H1 (cell line): ENCODE measurements at regions of chr11 and their contacts with region 1.

Region 1: GRCh38 chr11:67082035-67082791 is 25.6 kb downstream of the RHOD start:
- DNase-seq: peak in 1 of 2 experiments; percentile 68
- H3K4me3 ChIP-seq: peak overlapping the region in 1 of 4 experiments; percentile 45; a peak in 3 of 8 replicates
- H3K27ac ChIP-seq: no peak overlapping the region
- H3K4me1 ChIP-seq: peaks cover 0 to 11% (median 4%) of the 10 kb centered on the region in 4 experiments; a peak in 4 of 7 replicates
- H3K27me3 ChIP-seq: no peaks in the 10 kb centered on the region
- CTCF ChIP-seq: peak; percentile 14 to 19 (median 17)
- EP300 ChIP-seq: no peak
- POLR2A ChIP-seq: no peak
- RAD21 ChIP-seq: peak in 1 of 2 experiments; percentile 41; a peak in 1 of 4 replicates

Region 2: DNA sequence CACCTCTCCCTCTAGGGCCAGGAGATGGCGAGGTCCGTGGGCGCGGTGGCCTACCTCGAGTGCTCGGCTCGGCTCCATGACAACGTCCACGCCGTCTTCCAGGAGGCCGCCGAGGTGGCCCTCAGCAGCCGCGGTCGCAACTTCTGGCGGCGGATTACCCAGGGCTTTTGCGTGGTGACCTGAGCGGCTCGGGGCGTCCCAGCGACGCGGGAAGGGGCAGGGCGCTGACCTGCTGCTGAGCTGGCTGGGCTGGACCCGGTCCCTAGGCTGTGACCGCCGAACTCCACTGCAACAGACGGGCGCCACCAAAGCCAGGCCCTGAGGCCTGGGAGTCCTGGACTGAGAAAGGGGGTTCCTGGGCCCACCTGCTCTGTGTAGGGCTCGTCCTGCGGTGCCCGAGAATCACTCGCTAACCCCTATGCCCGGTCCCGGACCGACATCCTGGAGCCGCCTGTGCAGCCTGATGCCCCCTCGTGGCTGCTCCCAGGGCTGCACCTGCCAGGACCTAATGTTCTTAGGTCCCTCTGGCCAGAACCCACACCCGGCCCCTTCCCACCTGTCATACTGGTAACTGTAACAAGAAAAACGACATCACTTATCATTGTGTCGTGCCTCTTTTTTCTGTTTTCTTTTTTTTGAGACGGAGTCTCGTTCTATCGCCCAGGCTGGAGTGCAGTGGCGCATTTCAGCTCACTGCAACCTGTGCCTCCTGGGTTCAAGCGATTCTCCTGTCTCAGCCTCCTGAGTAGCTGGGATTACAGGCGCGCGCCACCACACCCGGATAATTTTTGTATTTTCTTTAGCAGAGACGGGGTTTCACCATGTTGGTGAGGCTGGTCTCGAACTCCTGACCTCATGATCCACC is 10.6 kb before region 1 on chr11:
- CTCF ChIA-PET with region 1: interaction called, 27 read pairs
- POLR2A ChIA-PET with region 1: interaction called, 4 read pairs
- DNase-seq: peak; percentile 83 to 96
- H3K4me3 ChIP-seq: peak overlapping the region; percentile 9 to 56 (median 44); a peak in 7 of 8 replicates
- H3K27ac ChIP-seq: no peak overlapping the region
- H3K4me1 ChIP-seq: peaks cover 0 to 1% (median 0%) of the 10 kb centered on the region in 4 experiments; a peak in 2 of 7 replicates
- H3K27me3 ChIP-seq: no peaks in the 10 kb centered on the region
- CTCF ChIP-seq: peak; percentile 90 to 97 (median 94)
- EP300 ChIP-seq: no peak
- POLR2A ChIP-seq: no peak
- RAD21 ChIP-seq: peak; percentile 69 to 73

Region 3: GRCh38 chr11:67099831-67100324 is 17.7 kb after region 1 on chr11:
- CTCF ChIA-PET with region 1: interaction called, 18 read pairs
- POLR2A ChIA-PET with region 1: interaction called, 7 read pairs
- DNase-seq: no peak
- H3K4me3 ChIP-seq: no peak overlapping the region
- H3K27ac ChIP-seq: no peak overlapping the region
- H3K4me1 ChIP-seq: peaks cover 0 to 3% (median 1%) of the 10 kb centered on the region in 4 experiments; a peak in 2 of 7 replicates
- H3K27me3 ChIP-seq: no peaks in the 10 kb centered on the region
- CTCF ChIP-seq: no peak
- EP300 ChIP-seq: no peak
- POLR2A ChIP-seq: no peak
- RAD21 ChIP-seq: no peak

Region 4: DNA sequence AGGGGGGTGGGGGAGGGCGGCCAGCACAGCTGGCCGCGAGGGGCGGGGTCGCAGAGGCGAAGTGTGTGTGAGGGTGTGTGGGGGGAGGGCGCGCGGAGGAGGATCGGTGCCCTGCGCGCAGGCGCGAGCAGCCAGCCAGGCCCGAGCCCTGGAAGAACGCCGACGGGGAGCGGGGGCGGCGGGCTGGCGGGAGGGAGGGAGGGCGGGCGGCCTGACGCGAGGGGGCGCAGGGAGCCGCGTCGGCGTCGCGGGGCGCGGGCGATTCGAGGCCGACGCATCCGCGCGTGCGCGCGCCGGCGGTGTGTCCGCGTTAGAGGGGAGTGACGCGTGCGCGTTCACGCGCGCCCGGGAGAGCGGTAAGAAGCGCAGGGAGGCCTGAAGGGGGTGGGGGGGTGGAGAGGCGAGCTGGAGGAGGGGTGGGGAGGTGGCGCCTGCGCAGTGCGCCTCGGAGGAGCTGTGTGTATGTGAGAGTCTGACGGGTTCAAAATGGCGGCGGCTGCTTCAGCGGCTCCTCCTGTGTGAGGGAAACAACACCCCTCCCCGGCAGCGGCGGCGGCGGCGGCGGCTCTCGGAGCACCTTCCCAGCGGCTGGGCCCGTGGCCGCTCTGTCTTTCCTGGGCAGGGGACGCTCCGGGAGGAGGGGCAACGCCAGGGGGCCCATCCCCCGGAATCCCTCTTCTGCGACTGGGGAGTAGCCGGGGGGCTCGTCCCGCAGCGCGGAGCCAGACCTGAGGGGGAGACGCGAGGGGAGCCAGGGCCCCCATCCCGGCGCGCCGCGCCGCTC is 36.8 kb after region 1 on chr11 and contains the start of gene KDM2A:
- CTCF ChIA-PET with region 1: interaction called, 11 read pairs
- POLR2A ChIA-PET with region 1: interaction called, 8 read pairs
- DNase-seq: peak; percentile 92 to 97
- H3K4me3 ChIP-seq: peak within 1 kb of the TSS; percentile 80 to 97 (median 92)
- H3K27ac ChIP-seq: peak within 1 kb of the TSS; percentile 94
- H3K4me1 ChIP-seq: peaks cover 0 to 5% (median 3%) of the 10 kb centered on the region in 4 experiments; a peak in 4 of 7 replicates
- H3K27me3 ChIP-seq: no peaks in the 10 kb centered on the region
- CTCF ChIP-seq: peak in 1 of 3 experiments; percentile 22; a peak in 1 of 4 replicates
- EP300 ChIP-seq: 0 out of 3 replicates have a peak, but pooled peaks of 1 of the 2 experiments have one; percentile 43
- POLR2A ChIP-seq: peak; percentile 30 to 52; a peak in 2 of 3 replicates
- RAD21 ChIP-seq: no peak; a peak in 1 of 4 replicates
- total RNA-seq, gene KDM2A: 56.6 and 66.2 TPM in 2 replicates

Region 5: DNA sequence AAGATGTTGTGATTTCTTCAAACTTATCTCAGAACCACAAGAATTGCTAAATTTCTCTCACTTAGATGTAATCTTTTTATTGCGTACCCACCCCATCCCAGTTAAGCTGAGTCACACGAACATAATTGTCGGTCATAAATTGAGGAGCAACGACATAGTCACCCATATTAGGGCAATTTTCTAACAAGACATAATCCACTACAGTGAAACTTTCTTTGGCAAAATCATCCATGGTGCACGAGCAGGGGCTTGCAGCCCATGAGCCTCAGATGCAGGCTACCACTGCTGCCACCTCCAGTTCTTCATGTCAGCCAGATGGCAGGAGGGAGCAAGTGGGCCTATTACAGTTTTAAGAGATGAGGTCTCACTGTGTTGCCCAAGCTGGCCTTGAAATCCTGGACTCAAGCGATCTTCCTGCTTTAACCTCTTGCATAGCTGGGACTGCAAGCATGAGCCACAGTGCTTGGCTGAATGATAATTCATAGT is 113.8 kb after region 1 on chr11:
- CTCF ChIA-PET with region 1: interaction called, 19 read pairs
- POLR2A ChIA-PET with region 1: no interaction called
- DNase-seq: no peak
- H3K4me3 ChIP-seq: no peak overlapping the region
- H3K27ac ChIP-seq: no peak overlapping the region
- H3K4me1 ChIP-seq: peaks cover 0 to 8% (median 1%) of the 10 kb centered on the region in 4 experiments; a peak in 2 of 7 replicates
- H3K27me3 ChIP-seq: no peaks in the 10 kb centered on the region
- CTCF ChIP-seq: peak in 2 of 3 experiments; percentile 4 to 7; a peak in 2 of 4 replicates
- EP300 ChIP-seq: no peak
- POLR2A ChIP-seq: no peak
- RAD21 ChIP-seq: no peak; a peak in 1 of 4 replicates